Aorta (tissue), 5 donors: ENCODE measurements at regions of chr18 and their contacts with region 1.

Region 1: DNA sequence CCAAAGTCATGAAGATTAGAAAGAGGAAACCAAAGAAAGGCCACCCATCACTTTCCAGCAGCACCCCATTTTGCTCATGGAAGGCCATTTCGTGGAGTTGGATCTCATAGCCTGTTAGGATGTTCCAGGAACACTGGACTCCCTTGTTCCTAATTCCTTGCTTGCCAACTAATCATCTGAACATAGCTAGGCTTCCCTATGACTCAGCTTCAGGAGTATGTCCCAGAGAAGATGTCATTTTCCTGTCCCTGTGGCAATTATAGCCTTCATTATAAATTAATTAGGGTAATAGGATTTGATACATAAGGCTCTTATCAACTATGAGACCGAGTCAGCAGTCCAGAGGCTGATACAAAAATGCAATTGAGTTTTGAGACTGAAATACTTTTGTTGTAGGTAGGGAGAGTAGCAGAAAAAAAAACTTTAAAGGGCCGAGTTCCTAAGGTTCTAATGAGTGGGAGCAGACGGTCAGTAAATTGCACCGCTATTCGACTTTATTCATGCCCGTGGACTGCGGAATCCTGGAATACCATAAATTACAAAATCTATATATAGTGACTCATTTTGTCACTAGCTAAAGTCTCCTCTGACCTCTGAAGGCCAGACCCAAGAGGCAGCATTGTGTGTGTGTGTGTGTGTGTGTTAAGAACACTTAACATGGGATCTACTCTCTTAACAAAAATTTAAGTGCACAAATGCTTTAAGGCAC is 311.8 kb downstream of the FBXO15 start:
- DNase-seq: no peak
- ATAC-seq: no peak
- H3K4me3 ChIP-seq: no peak overlapping the region
- H3K27ac ChIP-seq: no peak overlapping the region
- H3K4me1 ChIP-seq: no peaks in the 10 kb centered on the region
- H3K27me3 ChIP-seq: no peaks in the 10 kb centered on the region

Region 2: DNA sequence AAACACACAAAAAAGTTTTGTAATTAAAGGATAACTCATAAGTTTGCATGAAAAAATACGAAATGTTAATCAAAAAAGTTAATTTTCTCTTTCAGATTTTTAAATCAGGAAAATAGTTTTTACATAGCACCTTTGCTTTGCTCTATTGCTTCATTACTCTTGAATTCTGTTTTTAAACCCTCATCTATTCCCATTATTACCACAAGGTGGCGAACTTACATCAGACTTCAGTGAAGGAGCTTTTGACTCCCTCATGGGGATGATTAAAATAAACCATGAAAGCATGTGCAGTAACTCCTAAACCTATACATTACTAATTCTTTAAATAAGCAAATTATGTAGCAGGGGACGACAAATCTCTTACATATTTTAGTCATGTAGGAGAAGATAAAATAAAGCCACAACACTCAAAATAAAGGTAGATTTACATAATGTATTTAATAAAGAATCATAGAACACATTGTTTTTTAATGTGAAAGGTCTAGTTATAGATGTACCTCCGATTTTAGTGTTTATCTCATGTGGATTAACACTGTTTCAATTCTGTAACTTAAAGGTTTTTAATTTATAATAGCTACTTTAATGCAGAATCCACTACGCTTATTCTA is 1073.2 kb before region 1 on chr18:
- intact Hi-C with region 1: loop called in 1 of 2 experiments (anchors 10 kb)
- DNase-seq: no peak
- ATAC-seq: no peak
- H3K4me3 ChIP-seq: no peak overlapping the region
- H3K27ac ChIP-seq: no peak overlapping the region
- H3K4me1 ChIP-seq: no peaks in the 10 kb centered on the region
- H3K27me3 ChIP-seq: no peaks in the 10 kb centered on the region

Region 3: DNA sequence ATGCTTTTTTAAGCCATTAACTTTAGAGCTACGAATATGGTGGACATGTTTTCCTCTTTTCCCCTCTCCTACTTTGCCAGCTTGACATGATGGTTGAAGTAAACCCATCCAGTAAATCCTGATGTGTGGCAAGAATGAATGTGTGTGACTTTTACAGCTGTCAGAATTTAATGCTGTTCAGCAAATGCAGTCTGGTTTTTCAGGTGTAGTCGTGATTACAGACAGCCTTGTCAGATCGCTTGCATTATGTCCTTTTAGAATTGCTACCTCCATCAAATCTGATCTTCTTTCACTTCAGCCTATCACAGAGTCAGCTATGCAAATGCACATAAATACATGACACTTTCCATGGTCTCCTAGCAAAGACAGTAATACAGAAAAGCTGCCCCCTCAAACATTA is 33.4 kb after region 1 on chr18:
- intact Hi-C with region 1: no loop called
- DNase-seq: no peak
- ATAC-seq: no peak
- H3K4me3 ChIP-seq: no peak overlapping the region
- H3K27ac ChIP-seq: no peak overlapping the region
- H3K4me1 ChIP-seq: no peaks in the 10 kb centered on the region
- H3K27me3 ChIP-seq: no peaks in the 10 kb centered on the region

Region 4: GRCh38 chr18:73891572-73892421 is 56.0 kb after region 1 on chr18:
- intact Hi-C with region 1: no loop called
- DNase-seq: no peak
- ATAC-seq: no peak
- H3K4me3 ChIP-seq: no peak overlapping the region
- H3K27ac ChIP-seq: no peak overlapping the region
- H3K4me1 ChIP-seq: no peaks in the 10 kb centered on the region
- H3K27me3 ChIP-seq: no peaks in the 10 kb centered on the region

Region 5: DNA sequence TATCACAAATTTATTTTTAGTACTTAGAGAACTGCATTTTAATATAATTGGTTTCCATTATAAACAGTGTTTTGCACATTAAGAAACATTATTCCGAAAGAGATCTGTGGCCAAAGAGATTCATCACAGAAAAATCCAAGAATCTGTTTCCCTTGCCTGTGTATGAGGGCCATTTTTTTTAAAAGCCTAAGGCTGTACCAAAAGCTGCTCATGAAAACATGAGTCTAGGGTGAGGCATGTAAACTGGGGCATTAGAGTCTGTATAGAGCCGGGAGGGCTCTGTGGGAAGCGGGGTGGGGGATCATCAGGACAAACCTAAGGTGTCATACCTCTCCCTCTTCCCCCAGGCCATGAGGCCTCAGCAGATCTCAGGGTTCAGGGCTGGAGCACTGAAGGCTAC is 88.1 kb after region 1 on chr18:
- intact Hi-C with region 1: no loop called
- DNase-seq: no peak
- ATAC-seq: no peak
- H3K4me3 ChIP-seq: no peak overlapping the region
- H3K27ac ChIP-seq: no peak overlapping the region
- H3K4me1 ChIP-seq: no peaks in the 10 kb centered on the region
- H3K27me3 ChIP-seq: no peaks in the 10 kb centered on the region